Panc1 (cell line): ENCODE measurements at regions of chr2 and their contacts with region 1.

Region 1: DNA sequence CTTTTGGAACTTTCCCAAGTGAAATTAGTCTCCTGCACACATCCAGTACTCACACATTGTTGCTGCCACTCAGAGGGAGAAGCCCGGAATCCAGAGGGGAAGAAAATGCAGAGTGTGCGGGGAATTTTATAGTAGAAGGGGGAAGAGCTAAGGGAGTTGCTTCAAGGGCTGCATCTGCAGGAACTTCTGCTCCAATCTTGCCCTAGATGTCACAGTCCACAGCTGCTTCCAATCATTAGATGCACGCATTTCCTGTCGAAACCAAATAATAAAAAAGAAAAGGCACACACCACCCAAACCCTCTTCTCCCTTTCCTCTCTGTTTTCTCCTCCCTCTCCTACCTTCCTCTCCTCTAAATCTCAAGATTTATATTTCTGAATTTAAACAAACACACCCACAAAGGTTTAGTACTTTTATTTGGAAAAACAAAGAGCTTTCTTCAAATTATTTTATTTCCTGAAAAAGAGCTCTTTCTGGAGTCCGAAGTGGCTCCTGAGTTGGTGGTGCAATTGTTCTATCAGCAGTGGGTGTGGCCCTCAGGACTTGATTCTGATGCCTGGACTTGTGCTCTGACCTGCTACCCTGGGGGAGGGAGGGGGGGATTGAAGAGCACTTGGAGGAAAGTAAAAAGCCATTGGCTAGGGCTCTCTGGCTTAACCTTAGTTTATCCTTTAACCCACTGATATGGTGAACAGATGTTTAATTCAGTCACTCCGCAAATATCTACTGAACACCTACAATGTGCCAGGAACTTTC is 72.0 kb downstream of the KCNE4 start:
- DNase-seq: no peak
- ATAC-seq: no peak
- H3K4me3 ChIP-seq: no peak overlapping the region
- H3K27ac ChIP-seq: no peak overlapping the region
- H3K4me1 ChIP-seq: no peaks in the 10 kb centered on the region
- H3K27me3 ChIP-seq: no peaks in the 10 kb centered on the region
- CTCF ChIP-seq: no peak

Region 2: DNA sequence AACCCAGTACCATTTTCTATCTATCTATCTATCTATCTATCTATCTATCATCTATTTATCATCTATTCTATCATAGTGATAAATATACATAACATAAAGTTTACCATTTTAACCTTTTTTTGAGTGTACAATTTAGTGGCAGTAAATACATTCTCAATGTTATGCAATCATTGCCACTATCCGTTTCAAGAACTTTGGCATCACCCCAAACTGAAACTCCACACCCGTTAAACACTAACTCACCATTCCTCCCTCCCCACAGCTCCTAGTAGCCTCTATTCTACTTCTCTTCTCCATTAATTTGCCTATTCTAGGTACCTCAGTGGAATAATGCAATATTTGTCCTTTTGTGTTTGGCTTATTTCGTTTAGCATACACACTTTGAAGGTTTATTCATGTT is 154.5 kb before region 1 on chr2:
- CTCF ChIA-PET with region 1: no interaction called
- POLR2A ChIA-PET with region 1: no interaction called
- in situ Hi-C with region 1: no loop called
- intact Hi-C with region 1: no loop called
- DNase-seq: no peak
- ATAC-seq: no peak
- H3K4me3 ChIP-seq: no peak overlapping the region
- H3K27ac ChIP-seq: no peak overlapping the region
- H3K4me1 ChIP-seq: no peaks in the 10 kb centered on the region
- H3K27me3 ChIP-seq: no peaks in the 10 kb centered on the region
- CTCF ChIP-seq: no peak

Region 3: GRCh38 chr2:223058952-223059716 is 64.9 kb before region 1 on chr2:
- CTCF ChIA-PET with region 1: no interaction called
- POLR2A ChIA-PET with region 1: no interaction called
- in situ Hi-C with region 1: no loop called
- intact Hi-C with region 1: no loop called
- DNase-seq: no peak
- ATAC-seq: peak; percentile 62; the same call in 1 of the 2 replicates
- H3K4me3 ChIP-seq: no peak overlapping the region
- H3K27ac ChIP-seq: no peak overlapping the region
- H3K4me1 ChIP-seq: no peaks in the 10 kb centered on the region
- H3K27me3 ChIP-seq: no peaks in the 10 kb centered on the region
- CTCF ChIP-seq: no peak

Region 4: DNA sequence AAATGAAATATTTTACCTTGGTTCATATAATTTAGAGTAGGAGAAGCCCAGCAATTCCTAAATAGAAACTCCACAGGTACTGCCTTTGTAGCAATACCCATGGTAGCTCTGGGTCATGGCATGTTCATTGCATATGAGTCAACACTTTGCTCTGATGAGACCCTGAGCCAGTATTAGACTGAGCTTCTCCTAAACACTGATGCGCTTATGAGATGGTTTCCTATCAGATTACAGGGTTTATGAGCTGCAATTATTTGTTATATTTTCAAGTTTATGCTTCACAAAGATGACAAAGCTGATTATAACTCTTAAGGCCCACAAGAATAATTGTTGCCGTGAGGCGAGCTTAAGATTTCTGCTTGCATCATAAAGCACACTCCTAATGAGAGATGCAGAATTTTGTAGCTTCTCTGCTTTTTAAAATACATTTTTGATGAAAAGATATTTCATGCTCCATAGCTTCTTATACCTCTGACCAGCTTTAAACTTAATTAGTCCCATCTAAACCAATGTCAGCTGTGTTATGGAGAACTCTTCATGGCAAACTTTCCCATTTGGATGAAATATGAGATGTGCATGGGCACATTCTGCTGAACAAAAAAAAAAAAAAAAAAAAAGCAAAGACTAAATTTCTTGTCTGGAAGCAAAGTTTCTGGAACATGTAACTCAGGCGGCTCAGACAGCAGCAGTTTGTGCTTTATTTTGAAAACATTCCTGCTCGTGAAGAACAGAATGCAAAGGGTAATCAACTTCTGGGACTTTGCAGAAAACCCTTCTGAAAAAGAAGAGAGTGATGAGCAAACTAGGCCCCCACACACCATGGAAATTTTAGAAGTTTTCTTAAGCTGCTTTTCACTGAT is 90.6 kb after region 1 on chr2:
- CTCF ChIA-PET with region 1: no interaction called
- POLR2A ChIA-PET with region 1: interaction called, 20 read pairs
- in situ Hi-C with region 1: no loop called
- intact Hi-C with region 1: no loop called
- DNase-seq: no peak
- ATAC-seq: no peak
- H3K4me3 ChIP-seq: no peak overlapping the region
- H3K27ac ChIP-seq: no peak overlapping the region
- H3K4me1 ChIP-seq: no peaks in the 10 kb centered on the region
- H3K27me3 ChIP-seq: no peaks in the 10 kb centered on the region
- CTCF ChIP-seq: no peak

Region 5: DNA sequence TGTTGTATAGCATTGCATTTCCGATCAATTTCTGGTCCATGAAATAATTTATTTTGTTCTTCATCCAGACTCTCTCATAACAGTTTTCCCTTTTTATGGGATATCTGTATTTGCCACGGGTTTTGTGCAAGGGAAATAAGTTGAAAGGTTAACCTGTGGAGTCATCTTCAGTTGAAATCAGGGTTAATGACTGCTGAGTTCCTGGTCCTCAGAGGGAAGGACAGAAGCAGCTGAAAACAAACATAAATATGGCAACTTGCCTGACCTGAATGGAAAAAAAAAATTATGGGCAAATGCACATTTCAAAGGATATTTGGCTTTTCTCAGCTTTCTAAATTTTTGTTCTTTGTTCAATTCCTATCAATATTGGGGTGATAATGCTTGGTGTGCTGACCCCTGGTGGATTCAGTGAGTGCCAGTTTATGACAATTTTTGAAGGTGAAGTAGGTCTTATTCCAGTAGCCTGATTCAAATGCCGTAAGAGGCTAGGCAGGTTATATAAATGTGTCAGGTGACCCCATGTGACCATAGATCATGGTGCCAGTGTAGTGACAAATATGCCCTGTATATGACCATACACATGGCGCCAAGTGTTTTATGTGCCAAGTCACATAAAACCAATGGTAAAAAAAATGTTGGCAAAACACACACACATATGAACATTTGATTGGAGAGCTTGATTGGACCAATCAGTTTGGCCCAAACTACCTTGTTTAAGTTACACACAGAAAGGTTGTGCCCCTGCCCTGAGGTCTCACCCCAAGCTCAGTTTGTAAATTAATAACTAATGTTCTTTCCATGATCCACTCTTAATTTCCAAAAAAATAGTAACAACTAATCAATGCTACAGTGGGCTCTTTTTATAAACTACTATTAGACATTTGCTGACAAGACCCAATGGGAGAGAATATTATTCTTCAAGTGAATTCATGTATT is 1325.4 kb after region 1 on chr2:
- CTCF ChIA-PET with region 1: no interaction called
- POLR2A ChIA-PET with region 1: interaction called, 10 read pairs
- in situ Hi-C with region 1: no loop called
- intact Hi-C with region 1: no loop called
- DNase-seq: no peak
- ATAC-seq: no peak
- H3K4me3 ChIP-seq: no peak overlapping the region
- H3K27ac ChIP-seq: no peak overlapping the region
- H3K4me1 ChIP-seq: no peaks in the 10 kb centered on the region
- H3K27me3 ChIP-seq: no peaks in the 10 kb centered on the region
- CTCF ChIP-seq: peak; percentile 78